ENCODE measurements at regions of chr3 and their contacts with region 1.

Region 1: GRCh38 chr3:156509189-156510174 is 45.4 kb downstream of the SSR3 start:
- DNase-seq: peak; percentile 66
- ATAC-seq: peak; percentile 57
- H3K4me3 ChIP-seq: no peak overlapping the region
- H3K4me3 Mint-ChIP-seq: no peak overlapping the region
- H3K27ac ChIP-seq: no peak overlapping the region
- H3K27ac Mint-ChIP-seq: no peak overlapping the region
- H3K4me1 ChIP-seq: no peaks in the 10 kb centered on the region
- H3K4me1 Mint-ChIP-seq: no peaks in the 10 kb centered on the region
- H3K27me3 ChIP-seq: peaks cover 0 to 4% (median 2%) of the 10 kb centered on the region in 4 experiments
- H3K27me3 Mint-ChIP-seq: peaks cover 23% of the 10 kb centered on the region
- CTCF ChIP-seq: peak; percentile 81

Region 2: GRCh38 chr3:156040041-156040440 is 469.4 kb before region 1 on chr3:
- CTCF ChIA-PET with region 1: interaction called, 11 read pairs
- POLR2A ChIA-PET with region 1: no interaction called
- intact Hi-C with region 1: no loop called
- DNase-seq: no peak
- ATAC-seq: no peak
- H3K4me3 ChIP-seq: no peak overlapping the region
- H3K4me3 Mint-ChIP-seq: no peak overlapping the region
- H3K27ac ChIP-seq: no peak overlapping the region
- H3K27ac Mint-ChIP-seq: no peak overlapping the region
- H3K4me1 ChIP-seq: no peaks in the 10 kb centered on the region
- H3K4me1 Mint-ChIP-seq: no peaks in the 10 kb centered on the region
- H3K27me3 ChIP-seq: no peaks in the 10 kb centered on the region
- H3K27me3 Mint-ChIP-seq: peaks cover 15% of the 10 kb centered on the region
- CTCF ChIP-seq: no peak

Region 3: GRCh38 chr3:156341831-156342416 is 167.6 kb before region 1 on chr3:
- CTCF ChIA-PET with region 1: interaction called, 4 read pairs
- POLR2A ChIA-PET with region 1: no interaction called
- intact Hi-C with region 1: loop called (anchors 10 kb)
- DNase-seq: peak; percentile 67
- ATAC-seq: peak; percentile 84
- H3K4me3 ChIP-seq: no peak overlapping the region
- H3K4me3 Mint-ChIP-seq: no peak overlapping the region
- H3K27ac ChIP-seq: no peak overlapping the region
- H3K27ac Mint-ChIP-seq: no peak overlapping the region
- H3K4me1 ChIP-seq: peaks cover 6% of the 10 kb centered on the region in 2 donors
- H3K4me1 Mint-ChIP-seq: peaks cover 5% of the 10 kb centered on the region
- H3K27me3 ChIP-seq: no peaks in the 10 kb centered on the region
- H3K27me3 Mint-ChIP-seq: peaks cover 33% of the 10 kb centered on the region
- CTCF ChIP-seq: peak; percentile 53

Region 4: DNA sequence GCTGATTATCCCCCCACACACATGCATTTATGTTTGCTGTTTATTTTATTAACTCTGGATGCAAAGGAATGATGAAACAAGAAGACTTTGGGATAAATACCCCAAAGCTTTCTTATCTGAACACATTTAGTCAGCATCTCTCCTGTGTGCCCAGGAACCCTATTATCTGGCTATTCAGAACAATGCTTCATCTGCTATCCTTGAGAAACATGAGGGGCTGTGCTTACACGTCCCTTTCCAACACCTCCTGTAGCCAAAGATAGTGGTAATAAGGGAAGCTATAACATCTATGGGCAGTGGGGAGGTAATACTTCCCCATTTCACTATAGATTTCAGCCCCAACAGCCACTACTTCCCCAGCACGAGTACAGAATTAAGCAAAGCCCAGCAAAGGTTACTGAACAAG is 49.3 kb before region 1 on chr3:
- CTCF ChIA-PET with region 1: interaction called, 11 read pairs
- POLR2A ChIA-PET with region 1: no interaction called
- intact Hi-C with region 1: no loop called
- DNase-seq: no peak
- ATAC-seq: peak; percentile 45
- H3K4me3 ChIP-seq: no peak overlapping the region
- H3K4me3 Mint-ChIP-seq: no peak overlapping the region
- H3K27ac ChIP-seq: no peak overlapping the region
- H3K27ac Mint-ChIP-seq: no peak overlapping the region
- H3K4me1 ChIP-seq: peaks cover 0 to 4% of the 10 kb centered on the region in 2 donors
- H3K4me1 Mint-ChIP-seq: peaks cover 4% of the 10 kb centered on the region
- H3K27me3 ChIP-seq: peaks cover 0 to 4% (median 0%) of the 10 kb centered on the region in 4 experiments
- H3K27me3 Mint-ChIP-seq: peaks cover 7% of the 10 kb centered on the region
- CTCF ChIP-seq: no peak

Region 5: DNA sequence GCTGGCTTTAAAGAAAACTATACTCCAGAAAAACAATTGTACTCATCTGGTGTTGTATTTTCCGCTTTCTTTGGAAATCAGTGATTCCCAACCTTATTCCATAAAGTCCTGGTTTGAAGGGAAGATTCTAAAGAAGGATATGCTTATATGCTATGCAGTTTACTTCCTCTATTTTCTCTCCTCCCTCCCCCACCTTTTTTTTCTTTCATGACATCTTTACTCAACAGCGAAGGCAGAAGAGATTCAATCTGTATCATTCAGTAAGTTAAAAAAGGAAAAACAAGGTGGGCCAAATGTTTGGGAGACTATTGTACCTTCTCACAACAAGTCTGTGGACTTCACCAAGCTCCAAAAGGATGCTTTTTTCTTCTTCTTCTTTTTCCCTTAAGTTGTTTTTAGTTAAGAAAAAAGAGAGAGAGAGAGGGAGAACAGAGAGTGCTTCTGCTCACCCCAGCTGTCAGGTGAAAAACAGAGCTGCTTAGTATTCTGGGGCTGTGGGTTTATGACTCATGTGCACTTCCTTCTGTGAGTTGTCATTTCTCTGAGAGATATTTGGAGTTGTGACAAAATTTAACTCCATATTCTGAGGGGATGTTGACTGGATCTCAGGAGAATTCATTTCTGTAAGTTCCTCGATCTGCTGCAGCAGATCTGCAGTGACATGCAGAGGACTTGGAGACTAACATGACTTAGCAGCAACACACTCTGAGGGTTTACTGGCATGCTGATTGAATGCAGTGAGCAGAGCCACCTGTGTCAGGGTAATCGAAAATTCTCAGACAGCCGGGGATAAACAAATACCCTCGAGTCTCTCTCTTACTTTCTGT is 25.3 kb before region 1 on chr3:
- CTCF ChIA-PET with region 1: interaction called, 31 read pairs
- POLR2A ChIA-PET with region 1: no interaction called
- intact Hi-C with region 1: loop called (anchors 2 kb)
- DNase-seq: peak; percentile 62
- ATAC-seq: peak; percentile 79
- H3K4me3 ChIP-seq: peak overlapping the region in 2 of 5 experiments; percentile 36 to 59
- H3K4me3 Mint-ChIP-seq: peak overlapping the region; percentile 69
- H3K27ac ChIP-seq: peak overlapping the region; percentile 78 to 83
- H3K27ac Mint-ChIP-seq: peak overlapping the region; percentile 28
- H3K4me1 ChIP-seq: peaks cover 24 to 25% of the 10 kb centered on the region in 2 donors
- H3K4me1 Mint-ChIP-seq: peaks cover 30% of the 10 kb centered on the region
- H3K27me3 ChIP-seq: no peaks in the 10 kb centered on the region
- H3K27me3 Mint-ChIP-seq: peaks cover 1% of the 10 kb centered on the region
- CTCF ChIP-seq: no peak

Region 6: GRCh38 chr3:156643729-156644389 is 134.4 kb after region 1 on chr3:
- CTCF ChIA-PET with region 1: no interaction called
- POLR2A ChIA-PET with region 1: no interaction called
- intact Hi-C with region 1: no loop called
- DNase-seq: peak; percentile 68
- ATAC-seq: peak; percentile 83
- H3K4me3 ChIP-seq: peak overlapping the region in 3 of 5 experiments; percentile 2 to 31 (median 19)
- H3K4me3 Mint-ChIP-seq: peak overlapping the region; percentile 82
- H3K27ac ChIP-seq: no peak overlapping the region
- H3K27ac Mint-ChIP-seq: peak overlapping the region; percentile 61
- H3K4me1 ChIP-seq: peaks cover 16 to 17% of the 10 kb centered on the region in 2 donors
- H3K4me1 Mint-ChIP-seq: peaks cover 21% of the 10 kb centered on the region
- H3K27me3 ChIP-seq: no peaks in the 10 kb centered on the region
- H3K27me3 Mint-ChIP-seq: no peaks in the 10 kb centered on the region
- CTCF ChIP-seq: no peak

Region 7: GRCh38 chr3:157136647-157137387 is 627.3 kb after region 1 on chr3:
- CTCF ChIA-PET with region 1: interaction called, 16 read pairs
- POLR2A ChIA-PET with region 1: no interaction called
- intact Hi-C with region 1: loop called (anchors 1 kb)
- DNase-seq: no peak
- ATAC-seq: no peak
- H3K4me3 ChIP-seq: no peak overlapping the region
- H3K4me3 Mint-ChIP-seq: no peak overlapping the region
- H3K27ac ChIP-seq: peak overlapping the region in 1 of 2 donors; percentile 14
- H3K27ac Mint-ChIP-seq: no peak overlapping the region
- H3K4me1 ChIP-seq: peaks cover 4 to 7% of the 10 kb centered on the region in 2 donors
- H3K4me1 Mint-ChIP-seq: peaks cover 6% of the 10 kb centered on the region
- H3K27me3 ChIP-seq: no peaks in the 10 kb centered on the region
- H3K27me3 Mint-ChIP-seq: no peaks in the 10 kb centered on the region
- CTCF ChIP-seq: no peak

Measured in B cell (primary cell).